GM18951 (cell line): ENCODE measurements at regions of chr5 and their contacts with region 1.

Region 1: GRCh38 chr5:32159328-32160072 is 14.6 kb downstream of the GOLPH3 start:
- POLR2A ChIP-seq: no peak

Region 2: DNA sequence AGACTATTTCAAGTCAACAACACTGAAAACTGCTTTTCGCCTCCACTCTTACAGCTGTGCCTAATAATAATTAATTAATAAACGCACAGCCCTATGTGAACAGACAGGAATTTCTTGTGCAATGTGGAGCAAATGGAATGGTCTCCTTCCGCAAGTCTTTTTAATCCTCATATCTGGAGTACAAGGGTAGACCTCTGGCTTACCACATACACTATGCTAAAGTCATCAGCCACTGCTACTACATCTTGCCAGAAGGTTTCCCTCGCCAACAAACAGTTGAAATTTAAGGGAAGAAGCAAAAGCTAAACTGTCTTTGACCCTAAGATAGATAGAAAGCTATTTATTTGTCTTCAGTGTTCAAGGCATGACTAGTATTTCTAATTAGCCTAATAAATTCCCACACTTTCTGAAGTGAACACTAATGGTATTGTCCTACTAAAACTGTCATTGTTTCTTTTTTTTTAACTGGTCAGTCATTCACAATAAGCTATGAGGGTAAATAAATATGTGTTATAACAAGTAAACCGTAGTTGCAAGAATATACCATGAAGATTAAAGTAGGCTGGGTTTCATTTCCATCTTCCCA is 49.3 kb before region 1 on chr5:
- in situ Hi-C with region 1: loop called (anchors 5 kb)
- POLR2A ChIP-seq: no peak